ENCODE measurements at regions of chr9 and their contacts with region 1.

Region 1: DNA sequence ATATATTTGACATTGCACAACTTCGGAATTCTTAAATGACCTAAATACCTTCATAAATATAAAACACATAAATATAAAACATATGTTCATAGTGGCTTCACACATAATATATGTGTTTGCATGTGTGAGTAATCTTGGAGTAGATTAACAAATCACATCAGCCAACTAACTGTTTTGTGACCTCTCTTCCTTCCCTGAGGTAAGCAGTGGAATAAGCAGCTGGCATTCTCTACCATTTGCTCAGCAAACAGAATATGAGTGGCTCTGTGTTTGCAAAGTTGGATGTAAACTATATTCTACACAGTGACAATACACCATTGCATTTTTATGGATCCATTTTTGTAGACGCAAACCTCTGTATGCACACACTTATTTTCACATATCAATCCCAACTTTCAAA is 189.9 kb downstream of the ACER2 start:
- DNase-seq: no peak
- ATAC-seq: no peak
- H3K4me3 ChIP-seq: no peak overlapping the region
- H3K27ac ChIP-seq: no peak overlapping the region
- H3K4me1 ChIP-seq: no peaks in the 10 kb centered on the region
- H3K27me3 ChIP-seq: no peaks in the 10 kb centered on the region
- CTCF ChIP-seq: no peak

Region 2: GRCh38 chr9:19648672-19649071 is 50.0 kb after region 1 on chr9:
- intact Hi-C with region 1: loop called in 1 of 3 experiments (anchors 5 kb)
- DNase-seq: no peak
- ATAC-seq: no peak
- H3K4me3 ChIP-seq: no peak overlapping the region
- H3K27ac ChIP-seq: no peak overlapping the region
- H3K4me1 ChIP-seq: no peaks in the 10 kb centered on the region
- H3K27me3 ChIP-seq: no peaks in the 10 kb centered on the region
- CTCF ChIP-seq: no peak

Measured in pancreas (tissue), 10 donors.